ENCODE measurements at regions of chr1 and their contacts with region 1.

Region 1: DNA sequence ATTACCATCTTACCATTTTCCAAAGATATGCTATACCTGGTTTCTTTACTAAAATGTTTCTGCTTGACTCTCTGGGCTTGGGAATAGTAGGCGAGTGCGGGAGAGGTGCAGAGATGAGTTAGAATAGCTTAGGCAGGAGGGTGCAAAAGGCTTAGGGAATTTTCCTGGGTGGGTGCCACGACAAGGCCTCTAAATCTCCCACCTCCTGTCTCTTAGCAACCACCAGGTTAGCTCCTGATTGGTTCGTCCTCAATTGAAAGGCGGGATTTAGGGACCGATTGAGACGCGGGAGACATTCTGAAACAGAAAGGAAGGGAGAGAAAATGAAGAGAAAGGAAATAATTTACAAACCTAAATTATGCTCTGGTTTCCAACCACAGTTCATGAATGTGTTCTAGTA is 3.1 kb downstream of the ACKR1 start:
- DNase-seq: no peak
- ATAC-seq: no peak
- H3K4me3 ChIP-seq: peak overlapping the region in 2 of 10 donors; percentile 9 to 30
- H3K27ac ChIP-seq: no peak overlapping the region
- H3K4me1 ChIP-seq: peaks cover 0 to 14% (median 8%) of the 10 kb centered on the region in 9 donors
- H3K27me3 ChIP-seq: peaks cover 0 to 83% (median 68%) of the 10 kb centered on the region in 7 donors
- CTCF ChIP-seq: no peak

Region 2: GRCh38 chr1:159132271-159132881 is 75.4 kb before region 1 on chr1:
- intact Hi-C with region 1: loop called in 1 of 10 experiments (anchors 2 kb)
- DNase-seq: peak; percentile 36 to 61
- ATAC-seq: no peak
- H3K4me3 ChIP-seq: no peak overlapping the region
- H3K27ac ChIP-seq: no peak overlapping the region
- H3K4me1 ChIP-seq: no peaks in the 10 kb centered on the region
- H3K27me3 ChIP-seq: peaks cover 0 to 31% (median 6%) of the 10 kb centered on the region in 7 donors
- CTCF ChIP-seq: peak; percentile 52 to 91 (median 78)

Region 3: DNA sequence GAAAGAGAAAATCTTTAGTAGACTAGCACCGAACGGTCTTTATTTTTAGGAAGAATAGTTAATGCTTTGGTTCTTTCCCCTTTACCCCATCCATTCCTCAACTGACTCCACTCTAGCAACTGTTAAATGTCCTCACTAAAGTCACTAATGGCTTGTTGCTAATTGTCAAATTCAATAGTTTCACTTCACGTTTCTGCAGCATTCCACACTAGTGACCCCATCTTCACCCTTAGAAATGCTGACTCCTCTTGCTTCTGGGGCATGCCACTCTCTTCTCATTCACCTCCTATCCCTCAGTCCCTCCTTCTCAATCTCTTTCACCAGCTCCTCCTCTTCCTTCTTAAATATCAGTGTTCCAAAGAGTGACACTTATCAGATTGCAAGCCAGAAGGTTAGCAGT is 55.7 kb before region 1 on chr1:
- intact Hi-C with region 1: no loop called
- DNase-seq: no peak
- ATAC-seq: no peak
- H3K4me3 ChIP-seq: no peak overlapping the region
- H3K27ac ChIP-seq: no peak overlapping the region
- H3K4me1 ChIP-seq: no peaks in the 10 kb centered on the region
- H3K27me3 ChIP-seq: peaks cover 0 to 6% (median 0%) of the 10 kb centered on the region in 7 donors
- CTCF ChIP-seq: no peak

Region 4: DNA sequence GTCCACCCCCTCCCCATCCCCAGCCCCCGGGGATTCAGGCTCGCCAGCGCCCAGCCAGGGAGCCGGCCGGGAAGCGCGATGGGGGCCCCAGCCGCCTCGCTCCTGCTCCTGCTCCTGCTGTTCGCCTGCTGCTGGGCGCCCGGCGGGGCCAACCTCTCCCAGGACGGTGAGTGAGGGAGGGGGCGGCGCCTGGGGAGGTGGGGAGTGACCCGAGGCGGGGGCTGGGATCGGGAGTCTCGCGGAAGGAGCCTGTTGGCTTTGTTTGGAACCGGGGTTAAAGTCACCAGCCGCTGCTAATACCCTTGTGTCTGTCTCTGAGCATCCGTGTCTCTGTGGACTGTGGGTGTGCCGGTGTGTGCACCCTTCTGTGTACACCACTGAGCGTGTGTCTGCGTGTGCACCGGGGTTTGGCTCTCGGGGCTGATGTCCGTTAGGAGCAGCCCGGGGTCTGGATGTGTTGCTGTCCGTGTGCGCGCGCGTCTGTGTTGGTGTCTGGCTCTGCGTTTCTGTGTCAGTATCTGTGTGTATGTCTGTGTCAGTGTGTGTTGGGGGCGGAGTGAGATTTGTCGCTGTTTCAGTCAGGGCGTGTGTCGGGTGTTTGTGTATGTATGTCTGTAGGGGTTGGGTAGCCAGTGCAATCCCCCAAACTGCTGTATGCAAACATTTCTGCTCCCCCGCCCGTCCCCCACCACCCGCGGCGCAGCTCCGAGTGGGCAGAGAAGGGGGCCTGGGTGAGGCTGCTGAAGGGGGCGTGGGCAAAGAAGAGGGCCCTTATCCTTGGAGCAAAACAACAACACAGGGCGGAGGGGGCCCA is 35.9 kb before region 1 on chr1:
- intact Hi-C with region 1: loop called in 1 of 10 experiments (anchors 5 kb)
- DNase-seq: peak in 1 of 2 donors; percentile 11
- ATAC-seq: peak in 2 of 8 donors; percentile 10 to 45
- H3K4me3 ChIP-seq: peak overlapping the region; percentile 9 to 40 (median 24)
- H3K27ac ChIP-seq: no peak overlapping the region
- H3K4me1 ChIP-seq: peaks cover 0 to 15% (median 7%) of the 10 kb centered on the region in 9 donors
- H3K27me3 ChIP-seq: peaks cover 13 to 85% (median 66%) of the 10 kb centered on the region in 7 donors
- CTCF ChIP-seq: no peak